Activated naive CD4-positive, alpha-beta T cell treated with anti-CD3 and anti-CD28 coated beads for 36 hours (primary cell): ENCODE measurements at regions of chr2 and their contacts with region 1.

Region 1: GRCh38 chr2:63903003-63903402 is 61.3 kb downstream of the UGP2 start:
- DNase-seq: no peak
- H3K4me3 Mint-ChIP-seq: no peak overlapping the region
- H3K27ac Mint-ChIP-seq: no peak overlapping the region
- H3K4me1 Mint-ChIP-seq: peaks cover 18% of the 10 kb centered on the region
- H3K27me3 Mint-ChIP-seq: no peaks in the 10 kb centered on the region

Region 2: GRCh38 chr2:64018923-64019718 is 116.1 kb after region 1 on chr2 and contains the start of gene VPS54:
- CTCF ChIA-PET with region 1: interaction called, 3 read pairs
- intact Hi-C with region 1: loop called (anchors 5 kb)
- DNase-seq: peak; percentile 52
- H3K4me3 Mint-ChIP-seq: peak within 1 kb of the TSS; percentile 95
- H3K27ac Mint-ChIP-seq: peak within 1 kb of the TSS; percentile 95
- H3K4me1 Mint-ChIP-seq: peaks cover 34% of the 10 kb centered on the region
- H3K27me3 Mint-ChIP-seq: no peaks in the 10 kb centered on the region
- total RNA-seq, gene VPS54: 7.0 to 7.7 TPM